Caco-2 (cell line): ENCODE measurements at regions of chr7 and their contacts with region 1.

Region 1: DNA sequence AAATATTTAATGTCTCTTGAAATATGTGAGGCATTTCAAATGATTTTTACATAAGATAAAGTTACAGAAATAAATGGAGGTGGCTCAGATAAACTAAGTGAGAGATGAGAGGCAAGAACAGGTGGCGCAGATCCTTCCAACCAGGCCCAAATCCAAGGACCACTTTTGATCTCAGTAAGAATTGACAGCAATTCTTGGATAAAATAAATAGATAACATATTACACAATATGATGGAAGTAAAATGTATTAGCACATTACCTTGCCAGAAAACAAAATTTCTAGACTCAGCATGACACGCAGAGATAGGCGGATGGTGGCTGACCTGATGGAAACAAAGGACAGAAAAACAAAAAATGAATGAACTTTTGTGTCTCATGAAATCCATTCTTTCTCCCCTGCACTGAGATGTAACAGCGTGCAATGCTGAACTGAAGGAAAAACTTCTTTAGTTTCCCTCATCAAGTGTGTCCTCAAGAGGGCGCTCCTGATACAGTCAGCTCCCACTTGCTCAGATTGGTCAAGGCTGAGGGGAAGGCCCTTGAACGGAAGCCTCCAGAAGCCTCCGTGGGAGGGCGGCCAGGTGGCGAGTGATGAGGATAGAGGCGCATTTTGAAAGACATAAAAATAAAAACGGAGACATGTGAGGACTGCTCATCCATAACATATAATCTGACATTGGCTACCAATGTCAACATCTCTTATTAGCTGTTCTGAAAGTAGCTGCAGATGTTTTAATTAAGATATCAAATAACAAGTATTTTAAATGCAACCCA is 62.8 kb upstream of the GSDME start:
- DNase-seq: peak; percentile 84 to 88
- H3K4me3 ChIP-seq: no peak overlapping the region
- H3K4me3 Mint-ChIP-seq: peak overlapping the region; percentile 41
- H3K27ac Mint-ChIP-seq: peak overlapping the region; percentile 63
- H3K4me1 ChIP-seq: peaks cover 32% of the 10 kb centered on the region
- H3K4me1 Mint-ChIP-seq: peaks cover 17% of the 10 kb centered on the region
- H3K27me3 ChIP-seq: no peaks in the 10 kb centered on the region
- H3K27me3 Mint-ChIP-seq: no peaks in the 10 kb centered on the region
- CTCF ChIP-seq: peak; percentile 82 to 88

Region 2: DNA sequence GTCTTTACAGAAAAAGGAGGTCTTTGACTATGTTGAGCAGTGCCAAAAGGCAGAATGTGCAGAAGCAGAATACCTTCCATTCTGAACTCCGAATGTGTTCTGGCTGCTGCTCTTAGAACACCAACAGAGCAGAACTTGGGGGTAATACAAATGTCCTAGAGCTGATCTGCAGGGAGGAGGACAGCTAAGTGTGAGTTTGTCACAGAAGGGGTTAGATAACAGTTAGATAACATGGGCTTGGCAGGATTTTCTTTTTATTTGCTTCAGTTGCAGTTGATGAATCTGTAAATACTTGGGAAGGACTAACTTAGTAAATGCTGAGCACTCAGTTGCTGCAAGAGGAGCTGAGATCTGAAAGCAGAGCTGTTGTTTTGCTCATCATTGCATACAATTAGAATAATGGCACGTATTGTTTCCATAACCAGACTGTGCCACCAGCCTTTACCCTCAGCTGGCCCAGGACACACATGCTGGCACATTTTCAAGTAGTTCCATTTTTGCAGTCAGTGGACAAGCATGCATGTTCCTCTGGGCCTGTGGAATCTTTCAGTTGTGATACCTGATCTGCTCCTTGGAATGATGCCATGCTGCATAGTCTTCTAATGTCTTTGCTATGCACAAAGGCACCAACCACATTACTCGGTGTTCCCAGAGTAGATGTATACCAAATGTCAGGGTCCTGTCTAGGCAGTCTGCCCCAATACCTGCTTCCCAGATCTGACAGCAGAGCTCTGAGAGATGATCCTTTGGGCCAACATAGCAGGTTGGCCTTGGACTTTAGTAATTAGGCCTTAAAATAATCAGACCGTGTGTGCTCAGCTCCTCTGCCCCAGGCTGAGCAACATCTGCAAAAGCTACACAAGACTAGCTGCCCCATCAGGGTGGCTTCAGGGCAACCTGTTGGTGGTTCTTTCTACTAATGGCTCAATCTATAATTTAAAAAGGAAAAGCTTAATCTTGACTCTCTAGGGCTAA is 118.6 kb before region 1 on chr7:
- CTCF ChIA-PET with region 1: no interaction called
- POLR2A ChIA-PET with region 1: no interaction called
- intact Hi-C with region 1: no loop called
- DNase-seq: no peak
- H3K4me3 ChIP-seq: no peak overlapping the region
- H3K4me3 Mint-ChIP-seq: no peak overlapping the region
- H3K27ac Mint-ChIP-seq: no peak overlapping the region
- H3K4me1 ChIP-seq: no peaks in the 10 kb centered on the region
- H3K4me1 Mint-ChIP-seq: peaks cover 6% of the 10 kb centered on the region
- H3K27me3 ChIP-seq: no peaks in the 10 kb centered on the region
- H3K27me3 Mint-ChIP-seq: no peaks in the 10 kb centered on the region
- CTCF ChIP-seq: no peak

Region 3: GRCh38 chr7:24858108-24858977 is 38.2 kb after region 1 on chr7:
- CTCF ChIA-PET with region 1: no interaction called
- POLR2A ChIA-PET with region 1: no interaction called
- intact Hi-C with region 1: loop called (anchors 1 kb)
- DNase-seq: no peak
- H3K4me3 ChIP-seq: no peak overlapping the region
- H3K4me3 Mint-ChIP-seq: no peak overlapping the region
- H3K27ac Mint-ChIP-seq: no peak overlapping the region
- H3K4me1 ChIP-seq: 0 out of 2 replicates have a peak, but pooled peaks cover 3% of the 10 kb centered on the region
- H3K4me1 Mint-ChIP-seq: peaks cover 6% of the 10 kb centered on the region
- H3K27me3 ChIP-seq: no peaks in the 10 kb centered on the region
- H3K27me3 Mint-ChIP-seq: no peaks in the 10 kb centered on the region
- CTCF ChIP-seq: no peak

Region 4: DNA sequence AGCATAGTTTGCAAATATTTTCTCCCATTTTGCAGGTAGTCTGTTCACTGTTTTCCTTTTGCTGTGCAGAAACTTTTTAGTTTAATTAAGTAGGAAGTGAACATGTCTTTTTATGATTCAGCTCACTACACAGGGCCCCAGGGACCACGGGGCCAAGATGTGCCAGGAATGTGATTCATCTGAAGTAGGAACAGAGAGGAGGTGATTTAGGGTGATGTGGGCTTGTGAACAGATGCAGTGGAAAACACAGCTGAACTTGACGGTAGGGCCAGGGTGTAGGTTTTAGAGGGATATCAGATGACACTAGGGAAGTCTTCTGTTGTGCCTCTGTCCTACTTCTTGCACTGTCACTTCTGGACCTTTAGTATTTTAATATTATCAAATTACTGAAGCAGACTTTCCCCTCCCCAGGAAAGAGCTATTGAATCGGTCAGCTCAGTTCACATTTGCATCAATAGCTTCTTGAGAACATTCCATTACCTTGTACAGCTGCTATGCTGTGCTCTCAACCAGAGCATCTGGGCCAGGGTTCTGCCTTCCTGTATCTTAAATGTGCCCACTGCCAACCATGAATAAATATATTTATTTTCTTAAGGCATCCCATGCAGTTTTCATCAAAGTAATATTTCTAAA is 63.0 kb after region 1 on chr7:
- CTCF ChIA-PET with region 1: interaction called, 5 read pairs
- POLR2A ChIA-PET with region 1: no interaction called
- intact Hi-C with region 1: loop called (anchors 1 kb)
- DNase-seq: no peak
- H3K4me3 ChIP-seq: no peak overlapping the region
- H3K4me3 Mint-ChIP-seq: no peak overlapping the region
- H3K27ac Mint-ChIP-seq: peak overlapping the region; percentile 54
- H3K4me1 ChIP-seq: no peaks in the 10 kb centered on the region
- H3K4me1 Mint-ChIP-seq: peaks cover 7% of the 10 kb centered on the region
- H3K27me3 ChIP-seq: no peaks in the 10 kb centered on the region
- H3K27me3 Mint-ChIP-seq: no peaks in the 10 kb centered on the region
- CTCF ChIP-seq: no peak

Region 5: GRCh38 chr7:24896031-24896501 is 76.0 kb after region 1 on chr7:
- CTCF ChIA-PET with region 1: no interaction called
- POLR2A ChIA-PET with region 1: no interaction called
- intact Hi-C with region 1: loop called (anchors 2 kb)
- DNase-seq: no peak
- H3K4me3 ChIP-seq: no peak overlapping the region
- H3K4me3 Mint-ChIP-seq: no peak overlapping the region
- H3K27ac Mint-ChIP-seq: no peak overlapping the region
- H3K4me1 ChIP-seq: peaks cover under 1% of the 10 kb centered on the region; the same call in 1 of the 2 replicates
- H3K4me1 Mint-ChIP-seq: no peaks in the 10 kb centered on the region
- H3K27me3 ChIP-seq: no peaks in the 10 kb centered on the region
- H3K27me3 Mint-ChIP-seq: no peaks in the 10 kb centered on the region
- CTCF ChIP-seq: no peak

Region 6: GRCh38 chr7:24907311-24907886 is 87.3 kb after region 1 on chr7:
- CTCF ChIA-PET with region 1: no interaction called
- POLR2A ChIA-PET with region 1: no interaction called
- intact Hi-C with region 1: no loop called
- DNase-seq: no peak
- H3K4me3 ChIP-seq: no peak overlapping the region
- H3K4me3 Mint-ChIP-seq: no peak overlapping the region
- H3K27ac Mint-ChIP-seq: no peak overlapping the region
- H3K4me1 ChIP-seq: peaks cover 27% of the 10 kb centered on the region
- H3K4me1 Mint-ChIP-seq: peaks cover 10% of the 10 kb centered on the region
- H3K27me3 ChIP-seq: no peaks in the 10 kb centered on the region
- H3K27me3 Mint-ChIP-seq: no peaks in the 10 kb centered on the region
- CTCF ChIP-seq: no peak

Region 7: DNA sequence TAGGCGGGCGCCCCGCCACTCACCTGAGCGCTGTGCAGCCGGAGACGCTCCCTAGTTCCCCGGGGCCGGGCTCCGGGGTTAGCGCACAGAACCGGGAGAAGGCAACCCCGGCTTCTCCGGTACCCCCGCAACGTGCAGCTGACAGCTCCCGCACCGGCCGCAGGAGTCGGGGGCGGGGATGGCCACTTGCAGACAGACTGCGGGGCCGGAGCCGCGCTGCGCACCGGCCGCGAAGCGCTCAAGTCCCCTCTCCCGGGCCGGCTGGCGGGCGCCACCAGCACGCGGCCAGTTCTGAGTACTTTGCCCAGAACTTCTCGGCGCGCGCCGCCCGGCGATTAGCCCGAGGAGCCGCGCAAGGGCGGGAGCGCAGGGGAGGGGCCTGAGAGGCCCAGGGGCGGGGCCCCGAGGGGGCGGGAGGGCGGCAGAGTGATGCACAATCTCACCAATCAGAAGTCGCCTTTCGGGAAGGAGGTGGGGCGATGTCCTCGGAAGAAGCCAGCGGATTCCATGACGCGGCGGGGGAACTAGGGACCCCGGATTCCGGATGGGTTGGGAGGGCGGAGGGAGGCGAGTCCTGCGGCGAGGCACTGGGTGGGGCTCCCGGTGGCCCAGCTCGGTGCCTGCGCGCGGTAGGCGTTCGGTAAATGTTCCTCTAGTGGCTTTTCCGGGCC is 159.9 kb after region 1 on chr7 and contains the start of gene OSBPL3:
- CTCF ChIA-PET with region 1: interaction called, 3 read pairs
- POLR2A ChIA-PET with region 1: no interaction called
- intact Hi-C with region 1: loop called (anchors 1 kb)
- DNase-seq: peak; percentile 97
- H3K4me3 ChIP-seq: peak within 1 kb of the TSS; percentile 78
- H3K4me3 Mint-ChIP-seq: peak within 1 kb of the TSS; percentile 85
- H3K27ac Mint-ChIP-seq: peak within 1 kb of the TSS; percentile 96
- H3K4me1 ChIP-seq: peaks cover 23% of the 10 kb centered on the region
- H3K4me1 Mint-ChIP-seq: peaks cover 13% of the 10 kb centered on the region
- H3K27me3 ChIP-seq: no peaks in the 10 kb centered on the region
- H3K27me3 Mint-ChIP-seq: no peaks in the 10 kb centered on the region
- CTCF ChIP-seq: no peak
- total RNA-seq, gene OSBPL3: 43.9 and 45.1 TPM in 2 replicates

Region 8: GRCh38 chr7:25009257-25009656 is 189.2 kb after region 1 on chr7:
- CTCF ChIA-PET with region 1: no interaction called
- POLR2A ChIA-PET with region 1: no interaction called
- intact Hi-C with region 1: no loop called
- DNase-seq: no peak
- H3K4me3 ChIP-seq: no peak overlapping the region
- H3K4me3 Mint-ChIP-seq: no peak overlapping the region
- H3K27ac Mint-ChIP-seq: no peak overlapping the region
- H3K4me1 ChIP-seq: no peaks in the 10 kb centered on the region
- H3K4me1 Mint-ChIP-seq: no peaks in the 10 kb centered on the region
- H3K27me3 ChIP-seq: no peaks in the 10 kb centered on the region
- H3K27me3 Mint-ChIP-seq: no peaks in the 10 kb centered on the region
- CTCF ChIP-seq: no peak

Region 9: GRCh38 chr7:25069900-25070443 is 249.9 kb after region 1 on chr7:
- CTCF ChIA-PET with region 1: interaction called, 11 read pairs
- POLR2A ChIA-PET with region 1: no interaction called
- intact Hi-C with region 1: loop called (anchors 1 kb)
- DNase-seq: peak; percentile 73 to 76
- H3K4me3 ChIP-seq: peak overlapping the region; percentile 20
- H3K4me3 Mint-ChIP-seq: peak overlapping the region; percentile 62
- H3K27ac Mint-ChIP-seq: no peak overlapping the region
- H3K4me1 ChIP-seq: peaks cover 4% of the 10 kb centered on the region; the same call in 1 of the 2 replicates
- H3K4me1 Mint-ChIP-seq: peaks cover 10% of the 10 kb centered on the region
- H3K27me3 ChIP-seq: no peaks in the 10 kb centered on the region
- H3K27me3 Mint-ChIP-seq: no peaks in the 10 kb centered on the region
- CTCF ChIP-seq: peak; percentile 82 to 90

Region 10: DNA sequence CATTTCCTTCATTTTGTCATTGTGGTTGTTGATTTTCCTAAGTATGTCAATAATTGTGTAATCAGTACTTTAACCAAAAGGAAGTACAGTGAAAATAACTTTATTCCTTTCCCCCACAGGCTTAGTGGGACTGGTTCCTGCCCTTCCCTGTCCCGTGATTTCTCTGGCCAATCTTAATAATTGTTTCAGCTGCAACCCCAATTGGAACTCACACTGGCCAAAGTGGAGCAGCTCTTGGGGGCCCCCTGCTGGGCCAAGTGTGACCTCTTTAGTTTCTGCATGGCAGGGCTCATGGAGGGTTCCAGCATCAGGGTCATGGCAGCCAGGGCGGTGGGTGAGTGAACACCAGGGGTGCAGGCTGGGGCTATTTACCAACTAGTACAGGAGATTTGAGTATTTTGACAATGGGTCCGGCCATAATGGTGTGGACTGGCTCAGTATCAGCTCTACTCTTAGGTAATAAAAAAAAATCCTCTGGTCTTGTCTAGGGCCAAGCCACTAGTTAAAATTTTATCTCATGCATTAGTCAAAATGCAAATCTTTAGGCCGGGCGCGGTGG is 273.2 kb after region 1 on chr7:
- CTCF ChIA-PET with region 1: interaction called, 11 read pairs
- POLR2A ChIA-PET with region 1: no interaction called
- intact Hi-C with region 1: loop called (anchors 1 kb)
- DNase-seq: peak; percentile 84 to 89
- H3K4me3 ChIP-seq: no peak overlapping the region
- H3K4me3 Mint-ChIP-seq: no peak overlapping the region
- H3K27ac Mint-ChIP-seq: no peak overlapping the region
- H3K4me1 ChIP-seq: no peaks in the 10 kb centered on the region
- H3K4me1 Mint-ChIP-seq: peaks cover 25% of the 10 kb centered on the region
- H3K27me3 ChIP-seq: no peaks in the 10 kb centered on the region
- H3K27me3 Mint-ChIP-seq: peaks cover 3% of the 10 kb centered on the region
- CTCF ChIP-seq: peak; percentile 90 to 93